ENCODE measurements at regions of chr16 and their contacts with region 1.

Region 1: DNA sequence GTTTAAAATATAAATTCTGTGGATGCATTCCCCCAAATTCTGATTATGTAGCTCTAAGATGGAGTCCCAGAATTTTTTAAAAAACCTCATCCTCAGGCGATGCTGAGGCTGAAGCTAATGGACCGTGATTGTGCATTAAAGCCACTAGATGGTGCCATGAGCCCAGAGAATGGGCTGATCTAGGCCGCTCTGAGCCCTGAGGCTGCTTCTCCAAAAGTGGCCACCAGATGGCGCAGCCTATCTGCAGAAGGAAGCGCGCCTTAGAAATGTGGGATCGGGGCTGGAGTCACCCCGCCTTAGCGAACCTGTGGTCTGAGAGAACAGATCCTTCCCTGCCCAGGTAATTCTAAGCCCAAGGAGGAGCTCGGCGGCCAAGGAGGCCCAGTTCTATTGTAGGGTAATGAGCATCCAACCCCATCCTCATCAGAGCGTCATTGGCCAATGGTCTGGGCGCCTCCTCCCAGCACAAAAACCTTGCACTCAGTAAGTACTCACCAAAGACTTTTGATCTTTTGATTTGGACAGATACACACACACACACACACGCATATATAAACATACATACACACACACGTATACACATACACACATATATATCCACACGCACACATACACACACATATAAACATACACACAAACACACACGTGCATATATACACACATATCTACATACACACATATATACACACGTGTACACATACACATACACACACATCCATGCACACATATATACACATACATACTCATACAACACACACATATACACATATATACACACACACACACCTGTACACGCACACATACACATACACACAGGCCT is 13.7 kb upstream of the MMP2 start:
- DNase-seq: peak; percentile 38
- H3K4me3 ChIP-seq: no peak overlapping the region
- H3K27ac ChIP-seq: no peak overlapping the region
- H3K4me1 ChIP-seq: peaks cover 0 to 6% (median under 1%) of the 10 kb centered on the region in 3 donors
- H3K27me3 ChIP-seq: no peaks in the 10 kb centered on the region
- CTCF ChIP-seq: peak; percentile 99 to 100 (median 100)
- POLR2A ChIP-seq: no peak

Region 2: GRCh38 chr16:55393991-55394390 is 71.3 kb before region 1 on chr16:
- intact Hi-C with region 1: no loop called
- DNase-seq: no peak
- H3K4me3 ChIP-seq: no peak overlapping the region
- H3K27ac ChIP-seq: no peak overlapping the region
- H3K4me1 ChIP-seq: peaks cover 0 to 8% (median 0%) of the 10 kb centered on the region in 3 donors
- H3K27me3 ChIP-seq: peaks cover 0 to 5% (median 0%) of the 10 kb centered on the region in 4 donors
- CTCF ChIP-seq: no peak
- POLR2A ChIP-seq: no peak

Region 3: GRCh38 chr16:55543472-55543871 is 78.2 kb after region 1 on chr16:
- intact Hi-C with region 1: loop called (anchors 5 kb)
- DNase-seq: no peak
- H3K4me3 ChIP-seq: no peak overlapping the region
- H3K27ac ChIP-seq: no peak overlapping the region
- H3K4me1 ChIP-seq: peaks cover 0 to 10% (median 0%) of the 10 kb centered on the region in 3 donors
- H3K27me3 ChIP-seq: no peaks in the 10 kb centered on the region
- CTCF ChIP-seq: peak in 5 of 6 experiments; percentile 8 to 45 (median 18)
- POLR2A ChIP-seq: no peak

Region 4: DNA sequence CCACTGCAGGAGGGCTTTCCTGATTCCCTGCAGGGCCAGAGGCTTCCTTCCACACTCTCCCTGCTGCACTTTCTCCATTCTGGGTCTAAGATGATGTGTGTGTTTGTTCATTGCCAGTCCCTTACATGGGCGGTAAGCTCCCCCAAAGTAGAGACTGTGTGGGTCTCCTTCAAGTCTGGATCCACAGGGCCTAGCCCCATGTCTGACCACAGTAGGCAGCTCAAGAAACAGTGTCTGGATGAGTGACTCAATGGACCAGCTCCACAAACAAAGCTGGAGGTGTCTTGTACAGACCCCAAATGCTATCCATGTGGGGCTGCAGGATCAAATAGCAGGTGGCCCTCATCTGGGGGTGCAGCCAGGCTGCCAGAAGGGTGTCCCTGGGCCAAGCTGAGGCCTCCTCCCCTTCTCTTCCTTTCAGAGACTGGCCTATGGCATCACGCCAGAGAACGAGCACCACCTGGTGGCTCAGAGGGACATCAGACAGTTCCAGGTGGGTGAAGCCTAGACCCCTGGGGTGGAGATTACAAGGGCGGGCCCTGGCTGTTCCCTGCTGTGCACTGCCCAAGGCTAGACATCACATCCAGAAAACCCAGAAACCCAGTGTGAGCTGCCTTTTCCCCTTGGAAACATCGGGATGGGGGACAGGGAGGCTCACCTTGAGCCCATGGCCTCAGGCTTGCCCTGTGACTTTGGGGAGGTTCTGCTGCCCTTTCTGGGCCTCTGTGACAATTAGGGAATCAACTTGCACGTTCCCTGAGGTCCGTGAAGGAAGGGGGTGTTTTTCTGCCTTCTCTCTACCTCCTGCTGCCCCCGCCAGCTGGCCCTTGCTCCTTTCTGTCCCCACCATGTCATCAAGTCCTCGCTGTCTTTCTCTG is 236.4 kb after region 1 on chr16:
- intact Hi-C with region 1: loop called (anchors 2 kb)
- DNase-seq: no peak
- H3K4me3 ChIP-seq: no peak overlapping the region
- H3K27ac ChIP-seq: no peak overlapping the region
- H3K4me1 ChIP-seq: peaks cover 0 to 6% (median 0%) of the 10 kb centered on the region in 3 donors
- H3K27me3 ChIP-seq: peaks cover 0 to 8% (median 0%) of the 10 kb centered on the region in 4 donors
- CTCF ChIP-seq: peak in 5 of 6 experiments; percentile 65 to 77 (median 73)
- POLR2A ChIP-seq: no peak

Region 5: GRCh38 chr16:55728797-55729196 is 263.5 kb after region 1 on chr16:
- intact Hi-C with region 1: no loop called
- DNase-seq: no peak
- H3K4me3 ChIP-seq: no peak overlapping the region
- H3K27ac ChIP-seq: peak overlapping the region in 1 of 4 donors; percentile 24
- H3K4me1 ChIP-seq: no peaks in the 10 kb centered on the region
- H3K27me3 ChIP-seq: peaks cover 0 to 4% (median 0%) of the 10 kb centered on the region in 4 donors
- CTCF ChIP-seq: no peak
- POLR2A ChIP-seq: no peak

Region 6: GRCh38 chr16:55842369-55843104 is 377.2 kb after region 1 on chr16:
- intact Hi-C with region 1: loop called (anchors 10 kb)
- DNase-seq: no peak
- H3K4me3 ChIP-seq: no peak overlapping the region
- H3K27ac ChIP-seq: no peak overlapping the region
- H3K4me1 ChIP-seq: peaks cover 0 to 8% (median 4%) of the 10 kb centered on the region in 3 donors
- H3K27me3 ChIP-seq: peaks cover 0 to 38% (median 0%) of the 10 kb centered on the region in 4 donors
- CTCF ChIP-seq: peak; percentile 60 to 81 (median 78)
- POLR2A ChIP-seq: no peak

Measured in esophagus squamous epithelium (tissue), 5 donors.